OCI-LY7 (cell line): ENCODE measurements at regions of chr4 and their contacts with region 1.

Region 1: DNA sequence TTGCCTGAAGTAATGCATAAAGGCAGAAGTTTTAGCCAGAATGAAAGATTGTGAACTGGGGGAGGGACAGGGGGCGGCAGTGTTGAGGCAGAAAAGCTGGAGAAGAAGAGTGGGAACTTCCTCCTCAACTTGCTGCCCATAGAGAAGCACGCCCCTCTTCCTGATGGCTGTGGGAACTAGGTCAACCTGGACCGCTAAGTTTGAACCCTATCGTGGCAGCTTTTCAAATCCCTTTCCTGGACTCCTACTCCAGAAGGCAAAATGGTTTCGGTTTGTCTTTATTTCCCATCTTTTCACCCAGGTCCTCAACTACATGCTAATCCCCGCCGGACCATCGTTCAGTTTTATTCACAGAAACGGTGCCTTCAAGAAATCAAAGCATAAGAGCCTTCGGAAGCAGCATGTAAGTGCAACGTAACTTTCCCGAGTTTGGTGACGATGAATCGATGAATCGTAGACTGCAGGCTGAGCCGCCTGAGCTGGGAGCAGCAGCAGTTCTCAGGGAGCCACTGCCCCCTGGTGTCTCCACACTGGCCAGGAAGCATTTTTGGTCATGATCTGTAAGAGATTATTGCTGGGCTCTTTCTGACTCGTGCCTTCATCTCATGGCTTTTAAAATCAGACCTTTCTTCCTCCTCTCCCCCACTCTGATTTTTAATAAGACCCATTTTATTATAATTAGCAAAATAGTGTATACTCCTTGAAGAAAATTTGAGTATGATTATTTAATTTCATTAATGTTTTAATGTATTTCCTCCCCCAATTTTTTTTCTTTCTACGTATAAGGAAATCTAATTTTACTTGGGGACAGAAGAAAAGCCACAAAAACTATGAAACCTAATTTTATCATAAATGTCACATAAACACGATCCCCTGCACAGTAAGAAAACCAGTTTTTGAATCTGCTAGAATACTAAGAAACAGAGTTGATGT is 21.4 kb downstream of the SPINK2 start:
- DNase-seq: peak; percentile 86
- H3K4me3 ChIP-seq: peak overlapping the region; percentile 64
- H3K27ac ChIP-seq: no peak overlapping the region
- H3K4me1 ChIP-seq: peaks cover 19% of the 10 kb centered on the region
- CTCF ChIP-seq: peak; percentile 97

Region 2: GRCh38 chr4:56552273-56552672 is 247.8 kb before region 1 on chr4:
- CTCF ChIA-PET with region 1: no interaction called
- POLR2A ChIA-PET with region 1: no interaction called
- intact Hi-C with region 1: loop called (anchors 5 kb)
- DNase-seq: no peak
- H3K4me3 ChIP-seq: no peak overlapping the region
- H3K27ac ChIP-seq: no peak overlapping the region
- H3K4me1 ChIP-seq: no peaks in the 10 kb centered on the region
- CTCF ChIP-seq: no peak

Region 3: DNA sequence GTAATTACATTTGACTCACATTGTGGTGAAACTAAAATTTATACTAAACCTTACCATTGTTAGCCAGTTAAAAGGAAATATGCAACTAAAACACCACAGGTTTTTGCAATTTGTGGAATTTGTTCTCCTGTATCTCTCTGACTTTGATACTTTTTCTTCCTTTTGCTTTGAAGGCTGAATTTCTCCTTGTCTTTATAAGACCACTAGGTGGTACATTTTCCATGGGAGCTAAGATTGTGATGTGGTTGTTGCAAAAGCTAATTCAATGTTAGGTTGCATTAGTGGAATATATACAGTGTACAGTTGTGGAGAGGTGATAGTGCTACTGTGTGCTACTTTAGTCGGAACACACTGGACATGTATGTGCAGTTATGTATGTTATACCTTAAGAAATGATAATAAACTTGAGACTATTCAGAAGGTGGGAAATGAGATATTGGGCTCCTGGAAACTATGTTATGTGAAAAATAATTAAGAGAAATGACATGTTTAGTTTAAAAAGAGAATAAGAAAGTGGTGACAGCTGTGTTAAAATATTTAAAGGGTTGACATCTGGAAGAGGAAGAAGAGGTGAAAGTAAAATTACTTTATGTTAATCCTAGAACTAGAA is 224.2 kb before region 1 on chr4:
- CTCF ChIA-PET with region 1: no interaction called
- POLR2A ChIA-PET with region 1: no interaction called
- intact Hi-C with region 1: loop called (anchors 1 kb)
- DNase-seq: peak; percentile 39
- H3K4me3 ChIP-seq: no peak overlapping the region
- H3K27ac ChIP-seq: no peak overlapping the region
- H3K4me1 ChIP-seq: no peaks in the 10 kb centered on the region
- CTCF ChIP-seq: peak; percentile 75

Region 4: GRCh38 chr4:56668298-56668697 is 131.8 kb before region 1 on chr4:
- CTCF ChIA-PET with region 1: no interaction called
- POLR2A ChIA-PET with region 1: interaction called, 4 read pairs
- intact Hi-C with region 1: loop called (anchors 1 kb)
- DNase-seq: peak; percentile 56
- H3K4me3 ChIP-seq: no peak overlapping the region
- H3K27ac ChIP-seq: no peak overlapping the region
- H3K4me1 ChIP-seq: no peaks in the 10 kb centered on the region
- CTCF ChIP-seq: peak; percentile 80

Region 5: DNA sequence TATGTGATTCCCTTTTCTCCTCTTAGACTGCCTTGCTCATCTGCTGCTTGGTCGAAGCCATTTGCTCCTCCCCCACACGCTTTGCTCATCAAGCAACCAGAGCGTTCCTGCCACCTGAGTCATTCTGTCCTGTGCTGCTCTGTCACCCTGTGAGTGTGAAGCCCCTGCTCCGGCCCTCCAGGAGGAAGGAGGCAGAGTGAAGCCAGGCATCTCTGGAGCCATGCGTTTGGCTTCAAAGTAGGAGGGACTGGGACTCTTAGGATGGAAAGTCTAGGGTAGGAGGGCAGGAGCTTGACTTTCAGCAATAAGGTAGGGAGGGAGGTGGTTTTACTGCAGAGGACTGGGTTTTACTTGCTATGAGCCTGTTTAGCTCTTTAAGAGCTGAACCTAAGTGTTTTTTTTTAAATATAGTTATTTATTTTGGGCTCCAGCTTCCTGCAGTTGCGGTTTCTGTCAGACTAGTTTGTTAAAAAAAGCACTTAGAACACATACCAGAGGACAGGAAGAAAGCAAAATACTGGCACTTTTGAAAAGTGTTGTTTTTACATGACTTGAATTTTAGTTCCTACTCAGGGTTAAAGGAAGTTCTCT is 42.2 kb before region 1 on chr4:
- CTCF ChIA-PET with region 1: interaction called, 7 read pairs
- POLR2A ChIA-PET with region 1: interaction called, 8 read pairs
- intact Hi-C with region 1: loop called (anchors 1 kb)
- DNase-seq: peak; percentile 90
- H3K4me3 ChIP-seq: peak overlapping the region; percentile 63
- H3K27ac ChIP-seq: peak overlapping the region; percentile 98
- H3K4me1 ChIP-seq: peaks cover 66% of the 10 kb centered on the region
- CTCF ChIP-seq: no peak

Region 6: DNA sequence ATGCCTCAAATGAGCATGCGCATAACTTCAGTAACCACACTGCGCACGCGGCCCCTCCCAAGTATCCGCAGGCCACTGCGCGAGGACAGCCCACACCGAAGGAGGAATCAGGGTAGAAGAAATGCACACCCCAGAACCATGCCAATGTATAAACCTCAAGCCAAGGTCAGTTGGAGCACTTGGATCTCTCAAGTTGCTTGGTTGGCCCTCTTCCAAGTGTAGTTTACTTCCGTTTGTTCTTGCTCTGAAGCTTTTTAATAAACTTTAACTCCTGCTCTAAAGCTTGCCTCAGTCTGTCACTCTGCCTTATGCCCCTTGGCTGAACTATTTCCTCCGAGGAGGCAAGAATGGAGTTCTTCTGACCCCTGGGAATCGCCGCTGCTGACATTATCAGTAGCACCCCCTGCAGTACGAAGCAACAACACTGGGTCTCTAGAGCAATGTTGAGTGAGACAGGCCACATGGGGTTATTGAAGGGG is 43.4 kb after region 1 on chr4:
- CTCF ChIA-PET with region 1: no interaction called
- POLR2A ChIA-PET with region 1: interaction called, 11 read pairs
- intact Hi-C with region 1: no loop called
- DNase-seq: no peak
- H3K4me3 ChIP-seq: no peak overlapping the region
- H3K27ac ChIP-seq: no peak overlapping the region
- H3K4me1 ChIP-seq: peaks cover 5% of the 10 kb centered on the region
- CTCF ChIP-seq: no peak